ENCODE measurements at regions of chr6 and their contacts with region 1.

Region 1: GRCh38 chr6:20564269-20564668 is 30.0 kb downstream of the CDKAL1 start:
- DNase-seq: no peak
- H3K4me3 ChIP-seq: no peak overlapping the region
- H3K27ac ChIP-seq: no peak overlapping the region
- H3K4me1 ChIP-seq: peaks cover 0 to 11% (median 2%) of the 10 kb centered on the region in 6 donors
- H3K27me3 ChIP-seq: no peaks in the 10 kb centered on the region
- CTCF ChIP-seq: peak; percentile 35 to 81 (median 72)
- POLR2A ChIP-seq: no peak

Region 2: GRCh38 chr6:20438462-20439070 is 125.7 kb before region 1 on chr6:
- intact Hi-C with region 1: no loop called
- DNase-seq: no peak
- H3K4me3 ChIP-seq: no peak overlapping the region
- H3K27ac ChIP-seq: no peak overlapping the region
- H3K4me1 ChIP-seq: peaks cover 0 to 10% (median 0%) of the 10 kb centered on the region in 6 donors
- H3K27me3 ChIP-seq: no peaks in the 10 kb centered on the region
- CTCF ChIP-seq: no peak
- POLR2A ChIP-seq: no peak

Region 3: GRCh38 chr6:20688710-20689500 is 124.6 kb after region 1 on chr6:
- intact Hi-C with region 1: no loop called
- DNase-seq: no peak
- H3K4me3 ChIP-seq: no peak overlapping the region
- H3K27ac ChIP-seq: no peak overlapping the region
- H3K4me1 ChIP-seq: peaks cover 0 to 9% (median 2%) of the 10 kb centered on the region in 6 donors
- H3K27me3 ChIP-seq: no peaks in the 10 kb centered on the region
- CTCF ChIP-seq: no peak
- POLR2A ChIP-seq: no peak

Region 4: DNA sequence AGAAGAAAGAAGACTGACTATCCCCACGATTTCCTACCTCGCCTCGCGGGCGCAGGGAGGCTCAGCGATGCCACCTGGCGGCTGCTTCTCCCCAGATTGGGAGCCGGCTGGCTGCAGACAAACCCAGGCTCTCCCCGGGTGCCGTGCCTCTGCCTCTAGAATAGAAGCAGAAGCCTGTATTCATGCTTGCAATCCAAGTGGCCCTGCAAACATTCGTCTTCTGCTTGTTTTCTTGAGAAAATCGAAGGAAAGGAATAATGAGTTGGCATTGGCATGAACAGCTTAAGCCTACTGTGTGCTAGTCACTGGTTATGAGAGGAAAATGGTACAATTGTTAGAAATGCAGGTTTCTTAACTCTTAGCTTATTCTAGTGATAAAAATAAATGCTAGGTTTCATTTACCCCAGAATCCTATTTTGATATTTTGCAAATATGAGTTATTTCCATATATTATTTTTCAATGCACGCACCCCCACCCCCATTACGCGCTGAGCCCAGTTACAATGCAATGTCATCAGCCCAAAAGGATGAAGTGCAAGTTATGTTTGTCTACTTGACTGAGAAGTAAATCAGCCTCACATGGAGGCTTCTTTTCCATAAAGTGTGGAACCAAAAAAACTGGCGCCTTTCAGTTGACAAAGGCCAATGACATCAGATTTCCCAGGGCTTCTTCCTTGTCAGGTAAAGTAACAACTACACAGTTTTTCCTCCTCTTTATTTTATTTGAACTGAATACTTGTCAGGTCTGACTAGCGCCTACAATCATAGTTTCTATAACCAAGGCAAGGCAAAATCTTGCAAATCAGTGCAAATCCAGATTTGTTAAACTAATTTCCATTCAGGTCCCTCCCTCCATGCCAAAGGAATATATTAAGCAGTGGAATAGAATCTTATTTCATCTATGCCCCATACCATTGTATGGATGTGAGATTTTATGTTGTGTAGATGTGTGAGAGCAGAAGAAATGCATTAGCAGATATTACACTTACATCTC is 1025.4 kb after region 1 on chr6:
- intact Hi-C with region 1: loop called (anchors 5 kb)
- DNase-seq: peak; percentile 97
- H3K4me3 ChIP-seq: peak overlapping the region; percentile 54 to 90 (median 74)
- H3K27ac ChIP-seq: peak overlapping the region in 5 of 8 donors; percentile 62 to 71 (median 67)
- H3K4me1 ChIP-seq: peaks cover 10 to 54% (median 40%) of the 10 kb centered on the region in 6 donors
- H3K27me3 ChIP-seq: peaks cover 0 to 44% (median 10%) of the 10 kb centered on the region in 7 donors
- CTCF ChIP-seq: peak; percentile 36 to 94 (median 87)
- POLR2A ChIP-seq: no peak

Measured in spleen (tissue), 13 donors.